A549 (cell line): ENCODE measurements at regions of chr5 and their contacts with region 1.

Region 1: DNA sequence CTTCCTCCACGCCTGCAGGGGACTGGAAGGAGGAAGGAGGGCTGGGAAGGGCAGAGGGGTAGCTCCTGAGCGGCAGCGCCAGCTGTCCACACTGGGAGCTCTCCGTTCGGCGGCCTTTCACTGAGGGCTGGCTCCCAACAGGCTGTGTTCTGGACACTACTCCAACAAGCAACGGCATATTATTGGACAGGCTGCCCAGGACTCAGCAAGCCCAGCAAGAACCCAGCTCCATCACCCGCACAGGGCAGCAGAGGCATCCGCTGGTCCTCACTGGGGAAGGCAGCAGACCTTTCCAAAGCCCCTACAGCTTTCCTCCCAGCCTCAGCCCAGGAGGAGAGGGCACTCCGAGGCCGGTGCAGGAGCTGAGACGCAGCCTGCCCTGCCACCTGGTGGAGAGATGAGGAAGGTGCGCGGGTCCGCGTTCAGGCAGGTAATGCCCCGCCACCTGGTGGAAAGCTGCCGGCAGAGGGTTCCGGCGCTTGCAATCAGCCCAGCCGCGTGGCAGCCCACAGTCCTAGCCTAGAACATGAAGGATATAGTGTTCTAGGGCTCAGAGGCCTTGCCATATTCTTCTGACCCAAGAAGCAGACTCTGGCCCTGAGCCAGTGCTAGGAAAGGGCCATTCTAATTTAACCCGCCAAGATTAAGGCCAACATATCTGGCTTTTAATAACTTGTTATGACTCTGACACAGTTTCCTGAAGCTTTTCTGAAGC is 74.4 kb downstream of the NRG2 start:
- DNase-seq: peak; percentile 81 to 90
- ATAC-seq: peak; percentile 97 to 99
- H3K4me3 ChIP-seq: no peak overlapping the region
- H3K27ac ChIP-seq: no peak overlapping the region
- H3K4me1 ChIP-seq: no peaks in the 10 kb centered on the region
- CTCF ChIP-seq: peak; percentile 98
- EP300 ChIP-seq: no peak
- POLR2A ChIP-seq: no peak
- RAD21 ChIP-seq: peak; percentile 90 to 94

Region 2: GRCh38 chr5:139716966-139717620 is 251.6 kb before region 1 on chr5:
- CTCF ChIA-PET with region 1: no interaction called
- POLR2A ChIA-PET with region 1: no interaction called
- DNase-seq: no peak
- ATAC-seq: no peak
- H3K4me3 ChIP-seq: no peak overlapping the region
- H3K27ac ChIP-seq: no peak overlapping the region
- H3K4me1 ChIP-seq: no peaks in the 10 kb centered on the region
- CTCF ChIP-seq: no peak
- EP300 ChIP-seq: no peak
- POLR2A ChIP-seq: no peak
- RAD21 ChIP-seq: no peak

Region 3: DNA sequence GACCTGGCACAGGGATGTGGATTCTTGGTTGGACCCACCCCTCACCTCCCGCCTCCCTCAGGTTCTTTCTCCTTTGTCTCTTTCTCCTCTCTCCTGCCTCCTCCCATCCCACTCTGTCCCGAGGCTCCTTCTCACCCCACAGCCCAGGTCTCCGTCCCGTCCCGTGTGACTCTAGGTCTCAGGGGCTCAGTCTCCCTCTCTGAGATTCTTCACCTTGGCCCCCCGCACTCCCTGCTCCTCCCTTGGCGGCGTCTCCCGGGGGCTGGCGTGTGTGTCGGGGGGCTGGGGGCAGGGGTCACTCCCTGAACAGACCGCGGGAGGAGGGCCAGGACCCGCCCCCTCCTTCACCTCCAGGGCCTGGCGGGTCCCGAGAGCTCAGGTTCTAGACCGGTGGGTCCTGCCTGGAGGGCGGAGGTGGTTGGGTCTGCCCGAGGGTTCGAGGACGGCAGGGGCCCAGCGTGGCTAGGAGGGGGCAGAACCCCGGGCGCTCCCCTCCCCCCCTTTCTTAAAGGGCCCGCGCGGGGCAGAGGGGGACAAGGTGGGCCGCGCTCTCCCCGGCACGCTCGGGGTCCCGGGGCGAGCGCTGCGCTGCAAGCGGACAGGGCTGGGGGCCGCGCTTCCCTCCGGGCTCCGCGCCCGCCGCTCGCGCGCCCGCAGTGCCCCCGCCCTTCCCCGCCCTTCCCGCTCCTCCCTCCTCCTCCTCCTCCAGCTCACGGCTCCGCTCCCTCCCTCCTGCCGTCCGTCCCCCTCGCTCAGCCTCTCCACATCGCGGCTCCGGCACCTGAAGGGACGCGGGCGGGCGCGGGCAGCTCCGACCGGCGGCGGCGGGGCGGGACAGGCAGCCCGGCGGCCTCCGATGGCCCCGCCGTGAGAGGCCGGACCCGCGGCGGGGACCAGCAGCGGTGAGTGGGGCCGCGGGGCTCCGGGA is 173.4 kb before region 1 on chr5 and contains the start of gene PSD2:
- CTCF ChIA-PET with region 1: interaction called, 361 read pairs
- POLR2A ChIA-PET with region 1: no interaction called
- DNase-seq: no peak
- ATAC-seq: peak; percentile 7 to 15; a peak in 2 of 6 replicates
- H3K4me3 ChIP-seq: peak within 1 kb of the TSS; percentile 56
- H3K27ac ChIP-seq: peak within 1 kb of the TSS; percentile 34 to 79; a peak in 4 of 6 replicates
- H3K4me1 ChIP-seq: 0 out of 3 replicates have a peak, but pooled peaks cover 5% of the 10 kb centered on the region
- CTCF ChIP-seq: no peak
- EP300 ChIP-seq: no peak
- POLR2A ChIP-seq: no peak
- RAD21 ChIP-seq: no peak
- polyA plus RNA-seq, gene PSD2: 0.03 TPM in 1 of 2 replicates, not detected in the other

Region 4: DNA sequence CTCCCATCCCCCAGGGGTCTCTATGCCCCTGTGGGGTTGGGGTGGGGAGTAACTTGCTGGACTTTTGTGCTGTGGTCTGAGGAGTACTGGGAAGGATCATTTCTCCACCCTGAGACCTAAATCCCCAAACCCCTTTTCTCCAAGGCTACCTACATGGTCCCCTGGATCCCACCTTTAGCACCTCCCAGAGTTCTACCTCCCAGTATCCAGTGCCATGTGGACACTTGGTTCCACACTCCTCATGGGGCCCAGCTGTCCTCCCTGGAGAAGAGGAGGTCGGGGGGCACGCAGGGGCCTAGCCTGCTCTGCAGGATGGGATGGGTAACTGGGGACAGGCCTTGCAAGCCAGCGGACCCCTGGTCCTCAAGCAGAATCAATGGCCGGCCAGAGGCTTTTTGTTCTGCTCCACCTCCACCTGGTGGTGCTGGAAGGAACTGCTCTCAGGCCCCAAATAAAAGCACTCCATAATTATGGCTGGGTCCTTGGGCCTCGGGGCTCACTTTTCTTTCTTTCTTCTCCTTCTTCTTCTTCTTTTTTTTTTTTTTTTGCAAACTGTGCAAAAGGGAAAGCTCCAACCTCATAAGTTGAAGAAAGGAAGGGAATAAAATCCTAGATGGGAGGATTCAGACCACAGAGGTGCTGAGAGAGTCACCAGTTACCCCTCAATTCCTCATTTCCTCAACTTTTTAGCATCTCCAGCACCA is 104.7 kb before region 1 on chr5:
- CTCF ChIA-PET with region 1: interaction called, 48 read pairs
- POLR2A ChIA-PET with region 1: no interaction called
- DNase-seq: peak; percentile 49 to 80
- ATAC-seq: peak; percentile 67 to 90
- H3K4me3 ChIP-seq: no peak overlapping the region
- H3K27ac ChIP-seq: no peak overlapping the region
- H3K4me1 ChIP-seq: 0 out of 3 replicates have a peak, but pooled peaks cover 3% of the 10 kb centered on the region
- CTCF ChIP-seq: peak; percentile 68
- EP300 ChIP-seq: no peak
- POLR2A ChIP-seq: no peak
- RAD21 ChIP-seq: peak; percentile 66 to 72

Region 5: DNA sequence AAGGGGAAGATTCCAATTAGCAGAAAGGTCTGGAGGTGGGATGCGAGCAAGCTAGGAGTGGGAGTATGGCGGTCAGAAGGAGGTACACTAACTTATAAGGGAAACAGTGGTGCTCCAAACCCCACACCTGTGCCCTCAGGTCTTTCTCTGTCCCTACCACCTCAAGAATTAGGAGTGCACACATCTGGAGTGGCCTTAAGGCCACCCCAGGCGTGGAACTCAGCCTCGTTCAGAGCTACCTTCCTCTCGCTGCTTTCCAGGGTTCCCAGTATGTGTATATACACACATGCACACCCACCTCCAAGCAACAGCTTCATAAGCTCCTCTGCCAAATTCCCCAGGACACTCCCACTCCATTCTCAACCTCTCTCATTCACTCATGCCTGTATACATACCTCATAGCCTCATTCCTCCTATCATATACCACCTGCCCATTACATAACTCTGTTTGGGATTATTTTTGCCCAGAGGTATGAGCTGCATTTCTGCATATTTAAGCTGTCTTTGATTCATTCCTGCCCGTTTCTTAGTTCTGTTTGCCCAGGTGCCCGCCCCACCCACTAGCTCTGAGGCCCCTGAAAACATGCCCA is 54.4 kb before region 1 on chr5:
- CTCF ChIA-PET with region 1: interaction called, 12 read pairs
- POLR2A ChIA-PET with region 1: no interaction called
- DNase-seq: no peak
- ATAC-seq: no peak
- H3K4me3 ChIP-seq: no peak overlapping the region
- H3K27ac ChIP-seq: no peak overlapping the region
- H3K4me1 ChIP-seq: no peaks in the 10 kb centered on the region
- CTCF ChIP-seq: no peak
- EP300 ChIP-seq: no peak
- POLR2A ChIP-seq: no peak
- RAD21 ChIP-seq: no peak

Region 6: DNA sequence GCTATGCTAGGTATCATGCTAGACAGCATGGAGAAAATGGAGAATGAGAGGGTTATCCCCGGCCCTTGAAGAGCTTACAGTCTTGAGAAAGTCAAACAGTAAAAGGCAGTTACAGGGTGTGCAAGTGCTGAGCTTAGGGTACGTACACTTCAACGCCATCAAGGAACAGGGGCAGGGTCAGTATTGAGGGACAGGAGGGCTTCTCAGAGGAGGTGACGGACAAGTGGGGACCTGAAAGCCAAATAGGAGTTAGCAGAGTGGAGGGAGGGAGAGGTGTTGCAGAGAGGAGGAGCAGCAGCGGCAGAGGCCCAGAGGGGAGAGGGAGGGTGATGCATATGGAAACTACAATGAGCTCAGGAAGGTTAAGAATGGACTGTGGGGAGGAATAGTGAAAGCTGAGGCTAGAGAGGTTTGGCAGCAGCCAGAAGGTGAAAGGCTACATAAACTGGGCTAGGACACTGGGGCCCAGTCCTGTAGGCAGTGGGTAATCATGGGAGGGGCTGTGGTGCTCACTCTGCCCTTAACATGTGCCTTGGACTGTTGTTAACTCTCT is 13.6 kb before region 1 on chr5:
- CTCF ChIA-PET with region 1: interaction called, 67 read pairs
- POLR2A ChIA-PET with region 1: no interaction called
- DNase-seq: no peak
- ATAC-seq: no peak
- H3K4me3 ChIP-seq: no peak overlapping the region
- H3K27ac ChIP-seq: no peak overlapping the region
- H3K4me1 ChIP-seq: no peaks in the 10 kb centered on the region
- CTCF ChIP-seq: no peak
- EP300 ChIP-seq: no peak
- POLR2A ChIP-seq: no peak
- RAD21 ChIP-seq: no peak

Region 7: DNA sequence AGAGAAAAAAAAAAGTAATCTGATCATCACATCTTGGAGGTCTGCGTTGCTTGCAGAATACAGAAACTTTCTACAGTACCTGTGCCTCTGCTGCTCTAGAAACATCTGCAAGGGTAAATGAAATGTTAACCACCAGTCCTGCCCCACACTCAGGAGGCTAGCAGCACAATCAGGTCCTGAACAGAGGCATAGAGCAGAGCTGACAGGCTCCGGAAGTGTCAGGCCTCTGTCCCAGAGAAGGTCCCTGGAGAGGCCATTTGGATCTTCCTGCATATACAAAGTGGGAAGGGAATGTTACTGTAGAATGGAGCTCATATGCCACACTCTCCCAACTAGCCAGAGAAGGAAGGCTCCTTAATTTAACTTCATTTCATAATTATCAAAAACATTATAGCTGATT is 67.2 kb after region 1 on chr5:
- CTCF ChIA-PET with region 1: interaction called, 14 read pairs
- POLR2A ChIA-PET with region 1: no interaction called
- DNase-seq: no peak
- ATAC-seq: no peak
- H3K4me3 ChIP-seq: no peak overlapping the region
- H3K27ac ChIP-seq: no peak overlapping the region
- H3K4me1 ChIP-seq: peaks cover 10% of the 10 kb centered on the region; the same call in 1 of the 3 replicates
- CTCF ChIP-seq: no peak
- EP300 ChIP-seq: no peak
- POLR2A ChIP-seq: no peak
- RAD21 ChIP-seq: no peak